Left cardiac atrium (tissue), 4 donors: ENCODE measurements at regions of chr11 and their contacts with region 1.

Region 1: GRCh38 chr11:21142007-21142406 is 472.6 kb downstream of the NELL1 start:
- DNase-seq: no peak
- ATAC-seq: no peak

Region 2: GRCh38 chr11:21511835-21512440 is 369.9 kb after region 1 on chr11:
- intact Hi-C with region 1: loop called in 1 of 2 experiments (anchors 5 kb)
- DNase-seq: peak; percentile 45
- ATAC-seq: peak; percentile 55 to 73

Region 3: DNA sequence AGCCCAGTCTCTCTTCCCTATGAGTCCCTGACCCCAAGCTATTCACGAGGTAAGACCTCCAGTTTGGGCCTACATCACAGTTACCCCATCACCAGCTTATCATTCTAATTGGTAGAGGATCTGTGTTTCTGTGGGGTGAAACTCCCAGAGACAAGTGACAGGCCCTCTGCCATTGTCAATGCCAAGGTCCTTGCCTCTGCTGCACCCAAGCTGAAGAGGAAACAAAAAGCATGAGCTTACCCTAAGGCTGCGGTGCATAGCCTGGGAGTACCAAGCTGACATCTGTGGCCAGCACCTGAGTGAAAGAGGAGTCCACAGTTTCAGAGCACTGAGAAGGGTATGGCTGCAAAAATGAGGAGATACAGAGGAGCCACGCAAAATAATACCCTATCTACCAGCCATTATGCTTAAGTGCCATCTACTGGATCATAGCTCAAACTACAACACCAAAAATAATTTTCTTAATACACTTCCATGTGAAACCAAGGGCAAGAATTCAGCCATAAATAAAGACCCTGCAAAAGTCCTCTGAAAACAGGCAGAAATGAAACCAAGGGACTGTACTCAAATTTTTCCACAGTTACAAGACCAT is 988.6 kb after region 1 on chr11:
- intact Hi-C with region 1: loop called in 1 of 2 experiments (anchors 5 kb)
- DNase-seq: no peak
- ATAC-seq: no peak